ENCODE measurements at regions of chr19 and their contacts with region 1.

Region 1: DNA sequence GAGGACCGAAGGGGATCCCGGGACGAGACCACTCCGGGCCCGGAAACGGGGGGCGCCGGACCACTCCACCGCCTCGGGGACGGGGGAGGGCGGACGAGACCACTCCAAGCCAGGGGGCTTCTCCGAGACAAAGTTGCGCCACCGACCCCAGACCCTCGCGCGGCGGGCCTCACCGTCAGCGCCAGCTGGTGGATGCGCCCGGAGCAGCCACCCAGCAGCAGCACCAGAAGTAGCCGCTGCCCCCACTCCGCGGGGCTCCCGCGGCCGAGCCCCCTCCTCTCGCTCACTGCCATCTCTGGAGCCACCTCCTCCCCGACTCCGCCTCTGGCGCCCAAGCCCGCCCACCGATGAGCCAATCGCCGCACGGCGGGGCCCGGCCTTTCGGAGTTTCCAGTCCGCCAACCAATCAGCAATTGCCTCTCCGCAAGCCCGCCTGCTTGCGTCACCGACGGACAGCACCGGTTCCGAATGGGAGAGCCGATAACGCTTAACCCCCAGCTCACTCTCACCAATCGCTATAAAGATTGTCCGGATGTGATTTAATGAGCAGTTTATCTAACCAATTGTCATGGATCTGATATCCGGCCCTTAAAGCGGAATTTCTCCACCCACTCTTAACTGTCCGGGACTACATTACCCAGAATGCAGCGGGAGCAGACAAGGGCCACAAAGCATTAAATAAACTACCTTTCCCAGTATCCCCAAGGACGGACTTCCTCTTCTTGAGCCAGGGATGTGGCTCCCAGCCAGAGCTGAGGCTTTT is at the start of gene GPR108:
- DNase-seq: peak; percentile 100
- H3K4me3 Mint-ChIP-seq: peak within 1 kb of the TSS; percentile 98
- H3K27ac Mint-ChIP-seq: peak within 1 kb of the TSS; percentile 98
- H3K4me1 Mint-ChIP-seq: peaks cover 44% of the 10 kb centered on the region
- H3K27me3 Mint-ChIP-seq: peaks cover 7% of the 10 kb centered on the region

Region 2: GRCh38 chr19:6516659-6517291 is 220.7 kb before region 1 on chr19:
- CTCF ChIA-PET with region 1: interaction called, 14 read pairs
- DNase-seq: peak; percentile 94
- H3K4me3 Mint-ChIP-seq: peak overlapping the region; percentile 89
- H3K27ac Mint-ChIP-seq: peak overlapping the region; percentile 89
- H3K4me1 Mint-ChIP-seq: peaks cover 34% of the 10 kb centered on the region
- H3K27me3 Mint-ChIP-seq: peaks cover 23% of the 10 kb centered on the region

Region 3: GRCh38 chr19:6608940-6609339 is 128.5 kb before region 1 on chr19:
- CTCF ChIA-PET with region 1: no interaction called
- DNase-seq: no peak
- H3K4me3 Mint-ChIP-seq: no peak overlapping the region
- H3K27ac Mint-ChIP-seq: no peak overlapping the region
- H3K4me1 Mint-ChIP-seq: peaks cover 8% of the 10 kb centered on the region
- H3K27me3 Mint-ChIP-seq: peaks cover 31% of the 10 kb centered on the region

Region 4: GRCh38 chr19:6632002-6632621 is 105.4 kb before region 1 on chr19:
- CTCF ChIA-PET with region 1: interaction called, 34 read pairs
- DNase-seq: peak; percentile 86
- H3K4me3 Mint-ChIP-seq: no peak overlapping the region
- H3K27ac Mint-ChIP-seq: no peak overlapping the region
- H3K4me1 Mint-ChIP-seq: peaks cover 28% of the 10 kb centered on the region
- H3K27me3 Mint-ChIP-seq: peaks cover 7% of the 10 kb centered on the region

Region 5: GRCh38 chr19:6753178-6754031 is 15.9 kb after region 1 on chr19:
- CTCF ChIA-PET with region 1: no interaction called
- DNase-seq: peak; percentile 86
- H3K4me3 Mint-ChIP-seq: peak overlapping the region; percentile 39
- H3K27ac Mint-ChIP-seq: peak overlapping the region; percentile 91
- H3K4me1 Mint-ChIP-seq: peaks cover 25% of the 10 kb centered on the region
- H3K27me3 Mint-ChIP-seq: no peaks in the 10 kb centered on the region

Region 6: DNA sequence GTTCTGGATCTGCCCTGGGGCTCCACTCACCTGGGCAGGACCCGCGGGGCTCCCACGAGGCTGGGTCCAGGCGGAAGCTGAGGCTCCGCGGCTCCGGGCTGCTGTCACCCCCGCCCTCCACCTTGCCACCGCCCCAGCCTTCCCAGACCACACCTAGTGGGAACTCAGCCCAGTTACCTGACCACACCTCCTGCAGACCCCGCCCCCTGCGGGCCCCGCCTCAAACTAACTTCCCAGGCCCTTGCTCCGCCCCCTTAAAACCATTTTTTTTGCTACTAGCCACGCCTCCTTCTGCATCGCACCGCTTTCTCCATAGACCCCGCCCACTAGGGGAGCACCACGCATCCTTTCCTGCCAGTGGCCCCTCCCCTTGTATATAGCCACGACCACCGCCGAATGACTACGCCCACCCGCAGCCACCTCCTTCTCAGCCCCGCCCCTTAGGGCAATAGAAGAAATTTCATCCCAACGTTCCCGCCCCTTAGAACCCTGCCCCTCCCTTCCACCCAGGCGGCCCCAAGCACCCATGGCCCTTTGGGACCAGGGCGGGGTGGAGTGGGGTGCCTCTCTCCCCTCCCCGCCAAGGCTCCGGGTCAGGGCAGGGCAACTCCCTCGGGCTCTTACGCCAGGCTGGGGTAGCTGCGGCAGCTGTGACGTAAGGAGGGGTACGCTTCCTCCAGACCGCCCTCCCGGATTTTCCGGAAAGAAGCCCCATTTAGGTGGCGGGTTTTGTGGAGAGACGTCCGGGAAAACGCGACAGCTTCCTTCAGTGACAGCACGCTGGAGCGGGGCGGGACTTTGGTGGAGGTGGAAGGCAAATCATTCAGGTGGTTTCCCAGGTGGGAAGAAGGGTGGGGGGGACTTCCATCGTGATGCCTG is 30.1 kb after region 1 on chr19 and contains the start of gene SH2D3A:
- CTCF ChIA-PET with region 1: interaction called, 17 read pairs
- DNase-seq: peak; percentile 97
- H3K4me3 Mint-ChIP-seq: peak within 1 kb of the TSS; percentile 86
- H3K27ac Mint-ChIP-seq: peak within 1 kb of the TSS; percentile 90
- H3K4me1 Mint-ChIP-seq: peaks cover 60% of the 10 kb centered on the region
- H3K27me3 Mint-ChIP-seq: no peaks in the 10 kb centered on the region

Region 7: GRCh38 chr19:6862673-6863078 is 125.2 kb after region 1 on chr19:
- CTCF ChIA-PET with region 1: interaction called, 72 read pairs
- DNase-seq: peak; percentile 94
- H3K4me3 Mint-ChIP-seq: peak overlapping the region; percentile 75
- H3K27ac Mint-ChIP-seq: peak overlapping the region; percentile 86
- H3K4me1 Mint-ChIP-seq: peaks cover 27% of the 10 kb centered on the region
- H3K27me3 Mint-ChIP-seq: peaks cover 5% of the 10 kb centered on the region